Natural killer cell (primary cell): ENCODE measurements at regions of chr12 and their contacts with region 1.

Region 1: GRCh38 chr12:57238854-57239554 is 9.5 kb downstream of the SHMT2 start:
- DNase-seq: peak; percentile 92 to 94
- ATAC-seq: peak; percentile 83 to 95 (median 85)
- H3K4me3 ChIP-seq: peak overlapping the region; percentile 6
- H3K4me3 Mint-ChIP-seq: peak overlapping the region; percentile 88
- H3K27ac ChIP-seq: no peak overlapping the region
- H3K27ac Mint-ChIP-seq: peak overlapping the region; percentile 53 to 64
- H3K4me1 ChIP-seq: peaks cover 93% of the 10 kb centered on the region
- H3K4me1 Mint-ChIP-seq: peaks cover 45 to 79% of the 10 kb centered on the region in 2 donors
- H3K27me3 ChIP-seq: peaks cover 78% of the 10 kb centered on the region
- H3K27me3 Mint-ChIP-seq: peaks cover 61 to 71% of the 10 kb centered on the region in 2 donors
- CTCF ChIP-seq: peak; percentile 100

Region 2: DNA sequence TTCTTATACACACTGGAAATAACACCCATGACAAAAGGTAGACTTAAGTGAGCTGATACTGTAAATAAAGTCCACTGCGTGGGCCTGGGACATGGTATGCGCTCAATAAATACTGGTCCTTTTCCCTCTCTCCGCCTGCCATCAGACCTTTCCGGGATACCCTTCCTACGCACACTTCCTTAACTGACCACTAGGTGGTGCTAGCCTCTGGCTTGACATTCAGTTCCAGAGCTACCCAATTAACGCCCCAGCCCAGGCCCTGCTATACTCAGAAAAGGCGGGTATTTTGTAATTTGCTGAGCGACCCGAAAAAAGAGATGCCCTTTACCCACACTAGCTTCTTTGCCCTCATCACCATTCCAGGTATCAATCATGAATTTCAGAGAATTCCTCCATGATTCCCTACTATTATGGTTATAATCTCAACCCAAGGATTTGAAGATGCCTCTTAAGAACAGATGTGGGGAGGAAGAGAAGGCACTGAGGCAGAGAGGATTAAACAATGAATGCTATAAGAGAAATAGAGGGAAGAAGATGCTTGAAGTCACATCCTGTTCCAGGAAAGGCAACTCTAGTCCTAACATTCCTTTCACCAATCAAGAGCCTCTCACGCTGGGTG is 114.6 kb before region 1 on chr12:
- intact Hi-C with region 1: loop called (anchors 1 kb)
- DNase-seq: peak; percentile 61 to 90
- ATAC-seq: peak; percentile 79 to 91 (median 82)
- H3K4me3 ChIP-seq: no peak overlapping the region
- H3K4me3 Mint-ChIP-seq: peak overlapping the region; percentile 43
- H3K27ac ChIP-seq: no peak overlapping the region
- H3K27ac Mint-ChIP-seq: no peak overlapping the region
- H3K4me1 ChIP-seq: peaks cover 23% of the 10 kb centered on the region
- H3K4me1 Mint-ChIP-seq: peaks cover 11 to 20% of the 10 kb centered on the region in 2 donors
- H3K27me3 ChIP-seq: peaks cover 19% of the 10 kb centered on the region
- H3K27me3 Mint-ChIP-seq: peaks cover 8 to 9% of the 10 kb centered on the region in 2 donors
- CTCF ChIP-seq: peak; percentile 85

Region 3: GRCh38 chr12:57213058-57213715 is 25.8 kb before region 1 on chr12:
- intact Hi-C with region 1: loop called (anchors 1 kb)
- DNase-seq: peak; percentile 83 to 92
- ATAC-seq: peak; percentile 75 to 83 (median 78)
- H3K4me3 ChIP-seq: no peak overlapping the region
- H3K4me3 Mint-ChIP-seq: peak overlapping the region; percentile 63
- H3K27ac ChIP-seq: no peak overlapping the region
- H3K27ac Mint-ChIP-seq: peak overlapping the region; percentile 28 to 43
- H3K4me1 ChIP-seq: peaks cover 47% of the 10 kb centered on the region
- H3K4me1 Mint-ChIP-seq: peaks cover 31 to 45% of the 10 kb centered on the region in 2 donors
- H3K27me3 ChIP-seq: peaks cover 43% of the 10 kb centered on the region
- H3K27me3 Mint-ChIP-seq: peaks cover 33 to 42% of the 10 kb centered on the region in 2 donors
- CTCF ChIP-seq: peak; percentile 96

Region 4: GRCh38 chr12:57224973-57225679 is 13.9 kb before region 1 on chr12:
- intact Hi-C with region 1: loop called (anchors 2 kb)
- DNase-seq: peak; percentile 63 to 90
- ATAC-seq: no peak
- H3K4me3 ChIP-seq: no peak overlapping the region
- H3K4me3 Mint-ChIP-seq: peak overlapping the region; percentile 47
- H3K27ac ChIP-seq: no peak overlapping the region
- H3K27ac Mint-ChIP-seq: peak overlapping the region in 1 of 2 donors; percentile 82
- H3K4me1 ChIP-seq: peaks cover 92% of the 10 kb centered on the region
- H3K4me1 Mint-ChIP-seq: peaks cover 54 to 82% of the 10 kb centered on the region in 2 donors
- H3K27me3 ChIP-seq: peaks cover 57% of the 10 kb centered on the region
- H3K27me3 Mint-ChIP-seq: peaks cover 46 to 58% of the 10 kb centered on the region in 2 donors
- CTCF ChIP-seq: peak; percentile 60

Region 5: GRCh38 chr12:57552835-57553313 is 313.9 kb after region 1 on chr12:
- intact Hi-C with region 1: no loop called
- DNase-seq: no peak
- ATAC-seq: no peak
- H3K4me3 ChIP-seq: no peak overlapping the region
- H3K4me3 Mint-ChIP-seq: no peak overlapping the region
- H3K27ac ChIP-seq: no peak overlapping the region
- H3K27ac Mint-ChIP-seq: no peak overlapping the region
- H3K4me1 ChIP-seq: peaks cover 9% of the 10 kb centered on the region
- H3K4me1 Mint-ChIP-seq: peaks cover 0 to 9% of the 10 kb centered on the region in 2 donors
- H3K27me3 ChIP-seq: peaks cover 14% of the 10 kb centered on the region
- H3K27me3 Mint-ChIP-seq: peaks cover 19 to 39% of the 10 kb centered on the region in 2 donors
- CTCF ChIP-seq: no peak